ENCODE measurements at regions of chr1 and their contacts with region 1.

Region 1: DNA sequence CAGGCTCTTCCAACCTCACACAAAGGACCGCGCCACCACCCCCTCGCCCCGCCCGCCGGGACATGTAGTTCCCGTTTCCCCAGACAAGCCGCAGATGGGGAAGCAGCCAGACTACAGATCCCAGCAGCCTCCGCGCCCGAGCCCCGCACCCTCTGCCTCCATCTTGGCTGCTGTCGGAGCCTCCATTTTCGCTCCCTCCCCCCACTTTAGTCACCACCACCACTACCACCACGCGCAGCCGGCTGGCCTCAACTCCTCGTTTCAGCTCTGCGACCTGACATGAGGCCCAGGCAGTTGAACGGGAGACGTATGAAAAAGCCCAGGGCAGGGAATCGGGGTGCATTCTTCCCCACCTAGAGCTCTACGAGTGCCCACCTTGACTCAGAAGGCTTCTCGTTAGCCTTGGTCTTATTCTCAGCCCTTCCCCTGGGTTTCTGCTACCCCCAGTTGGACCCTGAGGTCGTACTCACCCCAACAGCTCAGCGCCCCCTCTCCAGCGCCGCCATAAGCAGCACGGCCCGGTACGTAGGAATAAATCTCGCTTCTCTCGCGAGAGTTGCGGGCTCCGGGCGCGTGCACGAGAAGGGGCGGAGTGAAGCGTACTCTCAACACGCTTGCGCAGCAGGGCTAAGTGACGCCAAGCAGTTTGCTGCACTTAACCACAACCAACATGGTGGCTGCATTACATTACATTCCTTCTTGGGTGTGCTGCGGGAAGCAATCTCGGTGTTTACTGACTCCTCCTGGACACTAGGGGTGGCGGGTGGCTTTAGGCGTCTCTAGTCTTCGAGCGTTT is at the start of gene CSDE1:
- DNase-seq: peak; percentile 98
- ATAC-seq: peak; percentile 86
- H3K4me3 ChIP-seq: peak within 1 kb of the TSS; percentile 89
- H3K27ac ChIP-seq: peak within 1 kb of the TSS; percentile 80
- H3K4me1 ChIP-seq: peaks cover 24% of the 10 kb centered on the region
- H3K27me3 ChIP-seq: no peaks in the 10 kb centered on the region
- CTCF ChIP-seq: peak; percentile 64
- total RNA-seq, gene CSDE1: 380 and 480 TPM in 2 replicates

Region 2: DNA sequence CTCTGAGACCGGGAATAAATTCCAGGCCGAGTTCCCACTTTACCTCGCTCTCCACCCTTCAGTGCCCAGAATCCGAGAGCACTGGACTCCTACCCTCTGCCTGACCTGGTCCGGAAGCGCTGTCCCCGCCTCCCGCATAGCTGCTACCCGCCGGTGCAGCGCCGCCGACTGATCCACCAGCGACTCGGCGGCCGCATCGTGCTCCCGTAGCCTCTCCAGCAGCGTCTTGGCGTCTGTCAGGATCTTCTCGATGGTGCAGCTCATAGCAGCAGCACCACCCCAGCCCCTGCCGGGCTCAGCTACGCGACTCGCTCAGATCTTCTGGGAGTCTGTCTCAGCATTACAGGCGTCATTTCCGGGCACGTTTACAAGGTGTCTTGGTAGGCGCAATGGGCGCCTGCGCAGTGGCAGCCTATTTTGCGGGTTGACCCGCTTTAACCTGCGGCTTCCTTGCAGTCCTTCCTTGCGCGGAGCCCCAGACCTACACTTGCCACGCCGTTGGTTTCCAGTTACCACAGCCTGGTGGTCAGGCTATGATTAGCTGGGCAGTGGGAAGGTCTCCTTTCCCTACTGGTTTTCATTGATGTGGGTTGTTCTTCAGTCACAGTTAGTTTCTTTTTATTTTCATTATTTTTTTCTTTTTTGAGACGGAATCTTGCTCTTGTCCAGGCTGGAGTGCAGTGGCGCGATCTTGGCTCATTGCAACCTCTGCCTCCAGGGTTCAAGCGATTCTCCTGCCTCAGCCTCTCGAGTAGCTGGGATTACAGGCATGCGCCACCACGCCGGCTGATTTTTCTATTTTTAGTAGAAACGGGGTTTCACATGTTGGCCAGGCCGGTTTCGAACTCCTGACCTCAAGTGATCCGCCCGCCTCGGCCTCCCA is 22.9 kb after region 1 on chr1 and contains the start of gene SIKE1:
- CTCF ChIA-PET with region 1: no interaction called
- POLR2A ChIA-PET with region 1: no interaction called
- intact Hi-C with region 1: loop called (anchors 2 kb)
- DNase-seq: peak; percentile 95
- ATAC-seq: peak; percentile 99
- H3K4me3 ChIP-seq: peak within 1 kb of the TSS; percentile 87
- H3K27ac ChIP-seq: peak within 1 kb of the TSS; percentile 60
- H3K4me1 ChIP-seq: 0 out of 2 replicates have a peak, but pooled peaks cover 4% of the 10 kb centered on the region
- H3K27me3 ChIP-seq: no peaks in the 10 kb centered on the region
- CTCF ChIP-seq: no peak
- total RNA-seq, gene SIKE1: 104 and 136 TPM in 2 replicates

Region 3: GRCh38 chr1:114833421-114833820 is 75.8 kb after region 1 on chr1:
- CTCF ChIA-PET with region 1: no interaction called
- POLR2A ChIA-PET with region 1: interaction called, 12 read pairs
- intact Hi-C with region 1: no loop called
- DNase-seq: peak; percentile 43
- ATAC-seq: peak; percentile 29; the same call in 1 of the 2 replicates
- H3K4me3 ChIP-seq: no peak overlapping the region
- H3K27ac ChIP-seq: no peak overlapping the region
- H3K4me1 ChIP-seq: no peaks in the 10 kb centered on the region
- H3K27me3 ChIP-seq: peaks cover 26% of the 10 kb centered on the region
- CTCF ChIP-seq: no peak

Measured in PC-3 (cell line).